ENCODE measurements at regions of chr19 and their contacts with region 1.

Region 1: GRCh38 chr19:10491472-10492047 is 11.6 kb downstream of the KEAP1 start:
- DNase-seq: no peak

Region 2: DNA sequence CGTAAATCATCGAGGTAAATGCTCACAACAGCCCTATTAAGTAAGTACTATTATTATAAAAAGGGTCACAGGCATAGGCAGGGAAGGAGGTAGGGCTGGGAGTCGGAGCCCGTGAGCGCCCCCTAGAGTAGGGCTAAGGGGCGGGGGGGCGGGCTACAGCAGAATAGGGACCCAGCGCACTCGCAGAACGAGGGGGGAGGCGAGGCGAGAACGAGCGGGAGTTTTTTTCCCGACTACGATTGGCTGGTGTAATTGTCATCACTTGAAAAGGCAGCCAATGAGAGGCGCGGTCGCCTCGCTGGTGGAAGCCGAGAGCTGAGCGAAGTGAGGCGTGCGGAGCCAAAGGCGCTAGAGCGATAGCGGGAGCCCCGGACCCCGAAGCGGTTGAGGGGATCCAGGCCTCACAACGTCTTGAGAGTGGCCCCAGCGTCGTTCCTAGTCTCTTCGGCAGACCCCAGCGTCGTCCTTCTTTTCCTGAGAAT is 12.6 kb before region 1 on chr19:
- CTCF ChIA-PET with region 1: interaction called, 11 read pairs
- POLR2A ChIA-PET with region 1: interaction called, 3 read pairs
- DNase-seq: peak; percentile 87

Region 3: GRCh38 chr19:10670182-10670581 is 178.6 kb after region 1 on chr19:
- CTCF ChIA-PET with region 1: interaction called, 12 read pairs
- POLR2A ChIA-PET with region 1: no interaction called
- DNase-seq: no peak

Measured in HEK293T (cell line).